BJ (cell line): ENCODE measurements at regions of chr20 and their contacts with region 1.

Region 1: DNA sequence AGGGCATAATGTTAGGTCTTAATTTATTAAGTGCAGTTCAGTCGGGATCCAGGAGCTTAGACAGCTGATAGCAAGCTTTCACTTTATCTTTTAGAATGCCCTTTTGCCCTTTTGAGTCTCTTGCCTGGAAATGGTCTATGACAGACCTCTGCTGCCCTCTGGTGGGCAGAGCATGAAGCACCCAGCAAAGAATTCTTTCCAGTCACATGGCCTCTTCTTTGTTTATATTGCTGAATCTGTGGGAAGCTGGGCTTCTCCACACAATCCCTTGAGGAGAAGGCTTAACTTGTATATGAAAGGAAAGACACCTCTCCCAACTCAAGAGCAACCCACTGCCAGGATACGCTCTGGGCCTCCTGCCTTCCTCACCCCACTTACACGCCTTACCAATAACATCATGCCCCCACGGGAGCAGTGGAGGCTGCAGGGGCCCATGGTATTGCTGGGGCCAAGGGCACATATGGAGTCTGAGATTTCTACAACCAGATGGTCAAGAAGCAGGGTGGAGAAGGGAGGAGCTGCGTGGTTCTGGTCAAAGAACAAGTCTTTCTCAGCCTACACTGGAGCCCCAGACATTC is 20.4 kb downstream of the WFDC3 start:
- DNase-seq: no peak
- H3K4me3 ChIP-seq: no peak overlapping the region
- H3K27me3 ChIP-seq: peaks cover 18% of the 10 kb centered on the region
- CTCF ChIP-seq: peak; percentile 90

Region 2: DNA sequence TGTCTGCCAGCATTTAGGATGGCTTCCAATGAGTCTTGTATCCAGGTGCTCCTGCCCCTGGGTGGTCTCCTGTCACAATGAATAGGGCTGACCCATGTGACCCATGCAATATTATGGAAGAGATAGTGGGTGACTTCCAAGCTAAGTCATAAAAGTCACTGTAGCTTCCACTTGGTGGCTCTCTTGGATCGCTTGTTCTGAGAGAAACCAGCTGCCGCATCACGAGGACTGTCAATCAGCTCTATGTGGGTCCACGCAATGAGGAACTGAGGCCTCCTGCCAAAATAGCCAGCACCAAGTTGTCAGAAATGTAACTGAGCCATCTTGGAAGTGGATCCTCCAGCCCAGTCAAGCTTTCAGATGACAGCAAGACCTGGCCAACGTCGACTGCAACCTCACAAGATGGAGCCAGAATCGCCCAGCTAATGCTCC is 448.3 kb before region 1 on chr20:
- CTCF ChIA-PET with region 1: interaction called, 29 read pairs
- POLR2A ChIA-PET with region 1: no interaction called
- DNase-seq: no peak
- H3K4me3 ChIP-seq: no peak overlapping the region
- H3K27me3 ChIP-seq: 0 out of 2 replicates have a peak, but pooled peaks cover 1% of the 10 kb centered on the region
- CTCF ChIP-seq: no peak

Region 3: GRCh38 chr20:45373353-45374100 is 397.7 kb before region 1 on chr20:
- CTCF ChIA-PET with region 1: interaction called, 17 read pairs
- POLR2A ChIA-PET with region 1: no interaction called
- DNase-seq: no peak
- H3K4me3 ChIP-seq: peak overlapping the region; percentile 33
- H3K27me3 ChIP-seq: no peaks in the 10 kb centered on the region
- CTCF ChIP-seq: peak; percentile 94

Region 4: GRCh38 chr20:45456632-45457031 is 314.6 kb before region 1 on chr20:
- CTCF ChIA-PET with region 1: interaction called, 10 read pairs
- POLR2A ChIA-PET with region 1: no interaction called
- DNase-seq: no peak
- H3K4me3 ChIP-seq: no peak overlapping the region
- H3K27me3 ChIP-seq: peaks cover 15% of the 10 kb centered on the region
- CTCF ChIP-seq: 0 out of 2 replicates have a peak, but pooled peaks have one; percentile 17

Region 5: DNA sequence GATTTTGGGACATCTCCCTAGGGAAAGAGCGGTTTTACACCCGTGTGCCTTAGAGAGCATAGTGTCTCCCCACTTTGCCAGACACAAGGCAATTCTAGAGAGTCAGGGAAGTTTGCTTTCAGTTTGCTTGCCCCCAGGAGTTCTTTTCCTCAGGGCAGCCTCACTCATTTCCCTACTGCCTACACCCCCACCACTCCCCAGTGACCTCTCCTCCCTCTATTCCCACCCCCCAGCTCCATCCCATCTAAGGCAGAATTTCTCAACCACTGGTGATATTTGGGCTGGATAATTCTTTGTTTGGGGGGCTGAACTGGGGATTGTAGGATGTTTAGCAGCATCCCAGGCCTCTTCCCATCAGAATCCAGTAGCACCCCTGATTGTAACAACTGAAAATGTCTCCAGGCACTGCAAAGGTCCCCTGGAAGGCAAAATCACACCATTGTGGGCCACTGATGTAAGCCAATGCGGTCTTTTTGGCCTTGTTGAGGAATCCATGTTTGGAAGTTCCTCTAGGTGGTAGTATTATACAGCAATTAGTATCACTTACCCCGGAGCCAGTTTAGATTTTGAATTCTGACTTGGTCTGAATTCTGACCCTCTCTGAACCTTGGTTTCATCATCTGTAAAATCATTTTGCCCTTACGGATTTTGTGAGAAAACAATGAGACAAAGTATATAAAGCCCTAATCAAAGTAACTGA is 225.4 kb before region 1 on chr20:
- CTCF ChIA-PET with region 1: interaction called, 31 read pairs
- POLR2A ChIA-PET with region 1: no interaction called
- DNase-seq: no peak
- H3K4me3 ChIP-seq: no peak overlapping the region
- H3K27me3 ChIP-seq: peaks cover 2% of the 10 kb centered on the region; the same call in 1 of the 2 replicates
- CTCF ChIP-seq: peak; percentile 40

Region 6: DNA sequence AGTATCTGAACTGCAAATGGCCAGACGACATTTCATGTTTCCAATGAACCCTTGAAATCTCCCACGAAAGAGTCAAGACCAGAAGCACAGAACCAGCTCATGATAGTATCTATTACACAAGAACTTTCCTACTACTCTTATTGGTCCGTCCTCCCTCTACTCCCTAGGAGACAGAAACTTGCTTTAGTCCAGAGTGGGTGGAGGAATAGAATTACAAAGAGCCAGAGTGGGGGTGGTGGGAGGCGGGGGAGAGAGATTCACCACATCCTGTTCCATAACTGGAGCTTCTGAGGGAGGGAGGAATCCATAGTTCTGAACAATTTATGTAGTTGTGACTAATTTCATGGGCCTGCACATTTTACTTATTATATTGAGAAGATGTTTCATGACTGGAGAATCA is 160.2 kb before region 1 on chr20:
- CTCF ChIA-PET with region 1: interaction called, 10 read pairs
- POLR2A ChIA-PET with region 1: no interaction called
- DNase-seq: peak; percentile 48
- H3K4me3 ChIP-seq: no peak overlapping the region
- H3K27me3 ChIP-seq: no peaks in the 10 kb centered on the region
- CTCF ChIP-seq: no peak

Region 7: DNA sequence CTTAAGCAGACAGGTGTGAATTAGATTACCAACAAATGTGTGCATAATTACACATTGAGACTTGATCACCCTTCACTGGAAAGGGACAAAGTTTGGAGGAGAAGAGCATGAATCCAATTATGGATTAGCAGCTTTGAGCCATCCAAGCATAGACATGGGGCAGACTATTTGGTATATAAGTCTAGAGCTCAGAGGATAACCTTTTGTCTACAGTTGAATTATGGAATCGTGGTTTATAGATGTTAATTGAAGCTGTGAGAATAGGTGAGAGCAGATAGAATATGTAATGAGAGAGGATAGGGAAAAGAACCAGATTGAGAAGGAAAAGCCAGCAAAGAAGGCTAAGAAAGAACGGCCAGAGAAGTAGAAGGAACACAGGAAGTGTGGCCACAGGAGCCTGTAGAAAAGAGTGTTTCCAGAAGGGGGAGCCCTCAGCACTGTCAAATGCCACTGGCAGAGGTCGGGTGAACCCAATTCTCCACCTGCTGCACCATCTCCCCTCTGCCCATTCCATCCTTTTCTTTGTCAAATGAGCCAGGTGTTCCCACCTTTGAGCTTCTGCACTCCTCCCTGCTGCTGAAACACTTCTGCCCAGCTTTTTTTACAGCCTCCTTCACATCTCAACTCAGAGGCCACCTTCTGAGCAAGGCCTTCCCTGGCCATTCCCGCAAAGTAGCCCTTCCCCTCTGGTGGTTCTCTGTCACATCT is 27.8 kb after region 1 on chr20:
- CTCF ChIA-PET with region 1: interaction called, 11 read pairs
- POLR2A ChIA-PET with region 1: no interaction called
- DNase-seq: no peak
- H3K4me3 ChIP-seq: no peak overlapping the region
- H3K27me3 ChIP-seq: no peaks in the 10 kb centered on the region
- CTCF ChIP-seq: peak; percentile 78

Region 8: DNA sequence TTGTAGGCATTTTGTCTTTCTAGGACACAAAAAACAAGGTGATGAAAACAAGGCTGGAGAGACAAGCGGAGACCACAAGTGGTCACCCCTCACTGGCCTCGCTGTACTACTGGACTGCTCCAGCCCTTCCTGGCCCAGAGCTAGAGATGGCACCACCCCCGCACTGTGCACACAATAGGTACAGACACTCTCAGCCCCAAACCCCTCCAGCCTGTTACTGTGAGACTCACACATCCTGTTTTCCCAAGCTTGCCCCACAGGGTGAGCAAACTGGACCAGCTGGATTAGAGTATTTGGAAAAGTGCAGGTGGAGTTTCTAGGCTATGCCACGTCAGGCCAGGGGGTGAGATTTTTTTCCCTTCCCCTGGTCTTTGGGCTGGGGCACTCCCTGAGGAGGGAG is 101.4 kb after region 1 on chr20:
- CTCF ChIA-PET with region 1: no interaction called
- POLR2A ChIA-PET with region 1: no interaction called
- DNase-seq: no peak
- H3K4me3 ChIP-seq: no peak overlapping the region
- H3K27me3 ChIP-seq: no peaks in the 10 kb centered on the region
- CTCF ChIP-seq: no peak